Calu3 (cell line): ENCODE measurements at regions of chr22 and their contacts with region 1.

Region 1: DNA sequence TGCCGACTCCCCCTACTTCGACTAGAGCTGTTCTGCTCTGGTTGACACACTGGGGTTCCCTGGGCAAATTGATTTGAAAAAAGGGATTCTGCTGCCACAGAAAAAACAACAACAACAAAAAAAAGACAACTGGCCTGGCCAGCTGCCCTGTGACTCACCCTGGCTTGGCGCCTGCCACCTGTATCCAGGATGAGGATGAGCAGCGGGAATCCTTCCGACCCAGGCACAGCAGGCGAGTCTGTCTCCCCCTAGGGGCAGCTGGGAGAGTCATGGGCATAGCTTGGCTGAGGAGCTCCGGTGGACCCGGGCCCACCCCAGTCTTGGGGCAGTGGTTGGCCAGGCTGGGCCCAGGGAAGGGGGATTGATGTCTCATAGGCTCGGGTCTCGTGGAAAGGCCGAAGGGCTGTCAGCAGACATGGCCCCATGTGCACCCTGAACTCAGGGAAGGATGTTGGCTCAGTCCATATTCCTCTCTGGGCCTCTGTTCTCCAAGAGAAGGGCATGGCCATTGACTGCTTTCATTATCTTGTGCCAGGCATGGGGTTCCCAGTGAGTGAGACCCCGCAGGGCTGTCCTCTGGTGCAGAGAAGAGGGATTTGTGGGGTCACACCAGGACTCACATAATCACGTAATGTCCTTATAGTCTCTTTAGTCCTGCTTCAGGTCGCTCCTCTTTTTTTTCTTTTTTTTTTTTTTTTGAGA is 10.4 kb upstream of the SUN2 start:
- DNase-seq: peak; percentile 78
- H3K4me3 Mint-ChIP-seq: no peak overlapping the region
- H3K27ac Mint-ChIP-seq: no peak overlapping the region
- H3K4me1 Mint-ChIP-seq: no peaks in the 10 kb centered on the region
- H3K27me3 Mint-ChIP-seq: peaks cover 10% of the 10 kb centered on the region
- CTCF ChIP-seq: peak; percentile 77

Region 2: DNA sequence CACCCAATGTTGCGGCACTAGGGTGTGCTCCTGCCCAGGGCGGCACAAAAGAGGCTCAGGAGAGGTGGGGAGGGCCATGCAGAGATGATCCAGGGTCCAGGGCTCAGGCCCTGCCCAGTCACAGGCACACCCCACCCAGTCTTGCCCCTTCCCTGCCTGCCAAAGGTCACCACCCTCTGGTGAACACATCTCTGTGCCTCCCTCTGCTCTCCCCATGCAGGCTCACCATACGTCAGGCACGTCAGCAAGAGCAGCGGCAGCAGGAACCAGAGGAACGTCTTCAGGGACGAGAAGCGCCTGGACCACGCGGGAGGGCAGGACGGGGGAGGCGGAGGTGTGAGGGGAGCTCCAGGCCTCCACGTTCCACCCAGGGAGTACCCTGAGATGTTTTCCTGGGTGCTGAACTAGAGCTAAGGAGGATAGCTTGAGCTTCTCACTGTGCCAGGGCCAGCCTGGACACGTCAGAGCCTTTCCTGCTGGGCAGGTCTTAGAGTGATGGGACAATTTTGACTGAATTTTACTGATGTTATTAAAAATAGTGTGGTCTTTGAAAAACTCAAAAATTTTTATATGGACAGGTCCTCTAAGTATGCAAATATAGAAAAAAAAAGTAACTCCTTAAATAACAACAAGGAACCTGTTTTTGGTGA is 17.6 kb before region 1 on chr22:
- CTCF ChIA-PET with region 1: no interaction called
- intact Hi-C with region 1: no loop called
- DNase-seq: no peak
- H3K4me3 Mint-ChIP-seq: no peak overlapping the region
- H3K27ac Mint-ChIP-seq: no peak overlapping the region
- H3K4me1 Mint-ChIP-seq: peaks cover 3% of the 10 kb centered on the region
- H3K27me3 Mint-ChIP-seq: no peaks in the 10 kb centered on the region
- CTCF ChIP-seq: no peak

Region 3: DNA sequence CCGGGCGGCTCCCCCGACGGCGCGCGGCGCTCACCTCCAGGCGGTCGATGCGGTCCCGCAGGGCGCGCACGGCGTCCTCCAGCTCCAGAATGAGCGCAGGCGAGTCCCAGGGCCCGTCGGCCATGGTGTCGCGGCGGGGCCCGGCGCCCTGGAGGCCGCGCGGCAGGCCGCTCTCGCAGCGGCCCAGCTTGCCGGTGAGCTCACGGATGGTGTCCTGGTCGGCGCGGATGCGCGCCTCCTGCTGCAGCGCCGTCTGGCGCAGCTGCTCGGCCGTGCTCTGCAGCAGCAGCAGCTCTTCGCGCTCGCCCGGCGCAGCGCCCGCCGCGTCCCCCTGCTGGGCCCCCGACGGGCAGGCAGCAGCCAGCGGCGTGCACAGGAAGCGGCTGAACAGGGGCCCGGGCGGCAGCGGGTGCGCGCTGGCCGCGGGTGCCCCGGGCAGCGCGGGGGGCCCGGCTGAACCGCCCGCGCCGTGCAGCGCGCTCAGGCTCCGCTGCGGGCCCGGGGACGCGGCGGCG is 77.0 kb after region 1 on chr22:
- CTCF ChIA-PET with region 1: interaction called, 49 read pairs
- intact Hi-C with region 1: no loop called
- DNase-seq: peak; percentile 70
- H3K4me3 Mint-ChIP-seq: peak overlapping the region; percentile 71
- H3K27ac Mint-ChIP-seq: peak overlapping the region; percentile 77
- H3K4me1 Mint-ChIP-seq: peaks cover 33% of the 10 kb centered on the region
- H3K27me3 Mint-ChIP-seq: peaks cover 83% of the 10 kb centered on the region
- CTCF ChIP-seq: peak; percentile 36

Region 4: GRCh38 chr22:38872172-38872830 is 106.1 kb after region 1 on chr22 and contains the start of gene CBX6:
- CTCF ChIA-PET with region 1: interaction called, 16 read pairs
- intact Hi-C with region 1: no loop called
- DNase-seq: peak; percentile 98
- H3K4me3 Mint-ChIP-seq: peak within 1 kb of the TSS; percentile 82
- H3K27ac Mint-ChIP-seq: peak within 1 kb of the TSS; percentile 83
- H3K4me1 Mint-ChIP-seq: peaks cover 36% of the 10 kb centered on the region
- H3K27me3 Mint-ChIP-seq: no peaks in the 10 kb centered on the region
- CTCF ChIP-seq: no peak
- total RNA-seq, gene CBX6: 140 and 152 TPM in 2 replicates

Region 5: GRCh38 chr22:38927033-38927781 is 161.0 kb after region 1 on chr22:
- CTCF ChIA-PET with region 1: interaction called, 11 read pairs
- intact Hi-C with region 1: no loop called
- DNase-seq: peak; percentile 91
- H3K4me3 Mint-ChIP-seq: peak overlapping the region; percentile 55
- H3K27ac Mint-ChIP-seq: peak overlapping the region; percentile 33
- H3K4me1 Mint-ChIP-seq: peaks cover 40% of the 10 kb centered on the region
- H3K27me3 Mint-ChIP-seq: no peaks in the 10 kb centered on the region
- CTCF ChIP-seq: peak; percentile 96

Region 6: GRCh38 chr22:39117585-39118191 is 351.5 kb after region 1 on chr22:
- CTCF ChIA-PET with region 1: interaction called, 18 read pairs
- intact Hi-C with region 1: loop called (anchors 5 kb)
- DNase-seq: peak; percentile 81
- H3K4me3 Mint-ChIP-seq: no peak overlapping the region
- H3K27ac Mint-ChIP-seq: no peak overlapping the region
- H3K4me1 Mint-ChIP-seq: peaks cover 21% of the 10 kb centered on the region
- H3K27me3 Mint-ChIP-seq: peaks cover 17% of the 10 kb centered on the region
- CTCF ChIP-seq: peak; percentile 61